ENCODE measurements at regions of chr16 and their contacts with region 1.

Region 1: DNA sequence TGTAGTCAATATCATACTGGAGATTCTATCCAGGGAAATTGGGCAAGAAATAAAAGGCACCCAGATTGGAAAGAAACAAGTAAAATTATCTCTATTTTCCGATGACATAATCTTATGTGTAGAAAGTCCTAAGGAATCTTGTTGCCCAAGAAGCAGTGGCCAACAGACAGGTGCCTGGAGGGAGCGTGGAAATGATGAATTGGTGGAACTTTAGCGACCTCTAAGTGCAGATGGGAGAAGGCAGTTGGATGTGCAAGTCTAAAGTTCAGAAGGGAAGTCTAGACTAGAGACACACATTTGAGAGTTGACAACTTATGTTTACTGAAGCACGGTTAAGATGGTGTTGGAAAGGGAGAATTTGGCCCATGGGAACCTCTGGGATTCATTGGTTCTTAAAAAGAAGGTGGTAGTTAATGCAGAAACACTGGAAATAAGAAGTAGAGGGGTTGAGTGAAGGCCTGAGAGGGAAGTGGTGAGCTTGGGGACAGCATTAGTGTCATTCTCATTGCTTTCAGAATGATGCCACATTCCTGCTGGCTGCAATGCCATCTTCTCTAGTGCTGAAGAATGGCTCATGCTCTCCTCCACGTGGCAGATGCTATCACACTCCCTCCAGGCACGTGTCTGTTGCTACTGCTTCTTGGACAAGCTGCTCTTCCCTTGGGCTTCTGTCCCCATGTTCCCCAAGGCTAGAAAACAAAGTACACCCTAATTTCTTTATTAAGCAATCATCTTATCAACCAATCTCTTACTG is 24.0 kb downstream of the TAT start:
- DNase-seq: no peak
- H3K4me3 ChIP-seq: no peak overlapping the region
- H3K27ac ChIP-seq: no peak overlapping the region
- H3K4me1 ChIP-seq: no peaks in the 10 kb centered on the region
- H3K27me3 ChIP-seq: no peaks in the 10 kb centered on the region
- CTCF ChIP-seq: peak; percentile 5 to 64 (median 57)
- EP300 ChIP-seq: no peak
- POLR2A ChIP-seq: no peak
- RAD21 ChIP-seq: peak; percentile 62 to 72

Region 2: GRCh38 chr16:71456801-71457200 is 96.1 kb before region 1 on chr16:
- CTCF ChIA-PET with region 1: no interaction called
- POLR2A ChIA-PET with region 1: no interaction called
- DNase-seq: no peak
- H3K4me3 ChIP-seq: no peak overlapping the region
- H3K27ac ChIP-seq: no peak overlapping the region
- H3K4me1 ChIP-seq: peaks cover 0 to 2% (median 0%) of the 10 kb centered on the region in 4 experiments; a peak in 1 of 7 replicates
- H3K27me3 ChIP-seq: no peaks in the 10 kb centered on the region
- CTCF ChIP-seq: no peak
- EP300 ChIP-seq: no peak
- POLR2A ChIP-seq: no peak
- RAD21 ChIP-seq: no peak

Region 3: DNA sequence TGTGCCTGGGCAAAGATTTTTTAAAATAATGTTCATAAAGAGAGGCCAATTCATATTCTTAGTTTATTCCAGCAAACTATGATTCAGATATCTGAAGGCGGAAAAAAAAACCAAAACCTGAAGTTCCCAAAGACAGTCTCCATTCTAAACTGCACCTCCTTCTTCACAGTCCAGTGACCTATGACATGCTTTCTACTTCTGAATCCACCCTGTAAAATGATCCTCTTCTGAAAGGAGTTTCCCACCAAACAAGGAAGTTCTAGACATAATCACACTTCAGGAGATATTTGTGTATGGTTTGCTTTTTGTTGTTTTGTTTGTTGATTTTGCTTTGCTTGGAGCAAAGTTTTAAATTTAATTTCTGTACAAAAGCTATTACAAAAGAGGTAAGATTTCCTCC is 39.6 kb before region 1 on chr16:
- CTCF ChIA-PET with region 1: no interaction called
- POLR2A ChIA-PET with region 1: no interaction called
- DNase-seq: no peak
- H3K4me3 ChIP-seq: no peak overlapping the region
- H3K27ac ChIP-seq: no peak overlapping the region
- H3K4me1 ChIP-seq: peaks cover 0 to 4% (median 1%) of the 10 kb centered on the region in 4 experiments; a peak in 4 of 7 replicates
- H3K27me3 ChIP-seq: no peaks in the 10 kb centered on the region
- CTCF ChIP-seq: no peak
- EP300 ChIP-seq: no peak
- POLR2A ChIP-seq: no peak
- RAD21 ChIP-seq: no peak

Region 4: GRCh38 chr16:71564155-71564967 is 11.5 kb after region 1 on chr16:
- CTCF ChIA-PET with region 1: interaction called, 11 read pairs
- POLR2A ChIA-PET with region 1: interaction called, 3 read pairs
- DNase-seq: peak in 1 of 2 experiments; percentile 98
- H3K4me3 ChIP-seq: peak overlapping the region; percentile 60 to 76 (median 68)
- H3K27ac ChIP-seq: peak overlapping the region; percentile 55; the same call in 1 of the 2 replicates
- H3K4me1 ChIP-seq: peaks cover 0 to 2% (median 0%) of the 10 kb centered on the region in 4 experiments; a peak in 1 of 7 replicates
- H3K27me3 ChIP-seq: no peaks in the 10 kb centered on the region
- CTCF ChIP-seq: no peak
- EP300 ChIP-seq: no peak
- POLR2A ChIP-seq: peak in 1 of 2 experiments; percentile 10; a peak in 2 of 3 replicates
- RAD21 ChIP-seq: no peak